CD4-positive, alpha-beta memory T cell (primary cell): ENCODE measurements at regions of chr12 and their contacts with region 1.

Region 1: DNA sequence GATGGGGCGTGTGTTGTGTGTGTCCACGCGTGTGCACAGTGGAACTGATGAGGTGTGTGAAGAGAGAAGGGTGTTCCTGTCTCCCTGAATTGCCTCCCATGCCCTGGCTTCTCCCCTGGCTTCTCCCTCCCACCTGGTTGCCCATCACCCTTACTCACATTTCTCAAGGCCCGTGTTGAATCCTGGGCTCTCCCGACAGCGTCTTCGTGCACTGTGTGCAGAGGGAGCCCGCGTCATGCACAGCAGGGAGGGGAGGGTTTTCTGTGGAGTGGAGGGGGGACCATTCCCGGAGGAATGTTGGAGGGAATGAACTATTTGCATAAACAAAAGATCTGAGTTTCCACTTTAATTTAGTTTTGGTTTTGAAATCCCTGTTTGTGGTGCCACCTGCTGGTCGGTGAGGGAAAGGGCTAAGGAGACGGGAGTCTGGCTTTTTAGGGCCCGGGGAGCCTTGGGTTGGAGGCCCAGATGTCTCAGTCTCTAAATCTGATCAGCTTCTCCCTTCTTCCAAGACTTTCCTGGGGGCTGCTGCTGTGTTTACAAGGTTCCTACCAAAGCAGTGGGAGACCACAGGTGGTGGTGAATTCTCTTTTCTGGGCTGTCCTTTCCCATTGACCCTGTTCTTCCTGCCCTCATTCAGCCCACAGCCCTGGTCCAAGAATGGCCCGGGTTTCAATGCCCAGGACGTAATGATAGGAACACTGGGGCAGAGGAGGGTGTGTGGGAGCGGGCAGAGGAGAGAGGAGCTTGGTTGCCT is at the start of gene C1R:
- DNase-seq: peak; percentile 60 to 71 (median 63)
- H3K4me3 ChIP-seq: peak within 1 kb of the TSS in 1 of 2 donors; percentile 56
- H3K4me3 Mint-ChIP-seq: peak within 1 kb of the TSS; percentile 70 to 90 (median 86)
- H3K27ac ChIP-seq: peak within 1 kb of the TSS; percentile 44
- H3K27ac Mint-ChIP-seq: peak within 1 kb of the TSS in 5 of 7 donors; percentile 57 to 89 (median 84)
- H3K4me1 ChIP-seq: peaks cover 15% of the 10 kb centered on the region
- H3K4me1 Mint-ChIP-seq: peaks cover 6 to 12% (median 8%) of the 10 kb centered on the region in 4 donors
- H3K27me3 ChIP-seq: no peaks in the 10 kb centered on the region
- H3K27me3 Mint-ChIP-seq: no peaks in the 10 kb centered on the region
- total RNA-seq, gene C1R: 0.86 to 2.3 TPM

Region 2: GRCh38 chr12:6851921-6852650 is 240.3 kb before region 1 on chr12 and contains the start of gene USP5:
- CTCF ChIA-PET with region 1: no interaction called
- POLR2A ChIA-PET with region 1: no interaction called
- intact Hi-C with region 1: no loop called
- DNase-seq: peak; percentile 99 to 100 (median 99)
- H3K4me3 ChIP-seq: peak within 1 kb of the TSS; percentile 62 to 97
- H3K4me3 Mint-ChIP-seq: peak within 1 kb of the TSS; percentile 88 to 99 (median 95)
- H3K27ac ChIP-seq: peak within 1 kb of the TSS; percentile 92
- H3K27ac Mint-ChIP-seq: peak within 1 kb of the TSS; percentile 82 to 100 (median 99)
- H3K4me1 ChIP-seq: peaks cover 37% of the 10 kb centered on the region
- H3K4me1 Mint-ChIP-seq: peaks cover 18 to 36% (median 27%) of the 10 kb centered on the region in 4 donors
- H3K27me3 ChIP-seq: no peaks in the 10 kb centered on the region
- H3K27me3 Mint-ChIP-seq: no peaks in the 10 kb centered on the region
- total RNA-seq, gene USP5: 65.2 to 69.3 TPM

Region 3: DNA sequence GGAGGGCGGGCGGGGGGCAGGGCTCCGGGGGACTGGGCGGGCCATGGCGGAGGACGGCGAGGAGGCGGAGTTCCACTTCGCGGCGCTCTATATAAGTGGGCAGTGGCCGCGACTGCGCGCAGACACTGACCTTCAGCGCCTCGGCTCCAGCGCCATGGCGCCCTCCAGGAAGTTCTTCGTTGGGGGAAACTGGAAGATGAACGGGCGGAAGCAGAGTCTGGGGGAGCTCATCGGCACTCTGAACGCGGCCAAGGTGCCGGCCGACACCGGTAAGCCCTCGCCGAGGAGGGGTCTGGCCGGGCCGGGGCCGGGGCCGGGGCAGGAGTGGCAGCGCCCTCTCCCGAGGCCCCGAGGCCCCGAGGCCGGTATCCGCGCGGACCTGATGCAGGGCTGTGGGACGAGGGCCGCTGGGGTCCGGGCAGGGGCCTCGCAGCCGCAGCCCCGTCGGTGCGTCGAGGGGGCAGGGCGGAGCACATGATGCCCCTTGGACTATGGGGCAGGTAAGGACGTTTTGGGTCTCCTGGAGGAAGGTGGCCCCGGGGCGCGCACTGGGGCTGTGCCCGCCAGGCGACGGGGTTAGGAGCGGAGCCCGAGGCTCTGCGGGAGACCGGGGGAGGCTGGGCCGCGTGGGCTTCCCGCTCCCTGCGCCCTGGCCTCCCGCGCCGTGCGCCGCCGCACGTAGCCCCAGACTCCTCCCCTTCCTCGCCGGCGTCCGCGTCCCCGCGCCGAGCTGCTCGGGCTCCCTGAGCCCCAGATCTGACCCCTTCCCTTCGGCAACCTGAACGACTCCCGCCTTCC is 224.8 kb before region 1 on chr12 and contains the start of gene TPI1:
- CTCF ChIA-PET with region 1: interaction called, 11 read pairs
- POLR2A ChIA-PET with region 1: interaction called, 3 read pairs
- intact Hi-C with region 1: loop called (anchors 1 kb)
- DNase-seq: peak; percentile 59 to 68 (median 62)
- H3K4me3 ChIP-seq: peak within 1 kb of the TSS; percentile 36 to 67
- H3K4me3 Mint-ChIP-seq: peak within 1 kb of the TSS; percentile 89 to 96 (median 92)
- H3K27ac ChIP-seq: peak within 1 kb of the TSS; percentile 69
- H3K27ac Mint-ChIP-seq: peak within 1 kb of the TSS; percentile 91 to 97 (median 93)
- H3K4me1 ChIP-seq: peaks cover 51% of the 10 kb centered on the region
- H3K4me1 Mint-ChIP-seq: peaks cover 33 to 58% (median 48%) of the 10 kb centered on the region in 4 donors
- H3K27me3 ChIP-seq: no peaks in the 10 kb centered on the region
- H3K27me3 Mint-ChIP-seq: no peaks in the 10 kb centered on the region
- total RNA-seq, gene TPI1: 155 to 164 TPM

Region 4: GRCh38 chr12:6921996-6922946 is 170.1 kb before region 1 on chr12:
- CTCF ChIA-PET with region 1: interaction called, 17 read pairs
- POLR2A ChIA-PET with region 1: interaction called, 3 read pairs
- intact Hi-C with region 1: loop called (anchors 1 kb)
- DNase-seq: no peak
- H3K4me3 ChIP-seq: no peak overlapping the region
- H3K4me3 Mint-ChIP-seq: no peak overlapping the region
- H3K27ac ChIP-seq: no peak overlapping the region
- H3K27ac Mint-ChIP-seq: peak overlapping the region in 4 of 7 donors; percentile 30 to 95 (median 49)
- H3K4me1 ChIP-seq: peaks cover 19% of the 10 kb centered on the region
- H3K4me1 Mint-ChIP-seq: peaks cover 13 to 33% (median 20%) of the 10 kb centered on the region in 4 donors
- H3K27me3 ChIP-seq: no peaks in the 10 kb centered on the region
- H3K27me3 Mint-ChIP-seq: no peaks in the 10 kb centered on the region

Region 5: GRCh38 chr12:6927379-6928024 is 164.9 kb before region 1 on chr12 and contains the start of gene ATN1:
- CTCF ChIA-PET with region 1: interaction called, 17 read pairs
- POLR2A ChIA-PET with region 1: interaction called, 3 read pairs
- intact Hi-C with region 1: loop called (anchors 1 kb)
- DNase-seq: peak; percentile 37 to 65 (median 45)
- H3K4me3 ChIP-seq: peak within 1 kb of the TSS; percentile 57 to 65
- H3K4me3 Mint-ChIP-seq: peak within 1 kb of the TSS; percentile 88 to 94 (median 90)
- H3K27ac ChIP-seq: peak within 1 kb of the TSS; percentile 67
- H3K27ac Mint-ChIP-seq: peak within 1 kb of the TSS; percentile 91 to 97 (median 94)
- H3K4me1 ChIP-seq: peaks cover 43% of the 10 kb centered on the region
- H3K4me1 Mint-ChIP-seq: peaks cover 31 to 57% (median 43%) of the 10 kb centered on the region in 4 donors
- H3K27me3 ChIP-seq: no peaks in the 10 kb centered on the region
- H3K27me3 Mint-ChIP-seq: no peaks in the 10 kb centered on the region
- total RNA-seq, gene ATN1: 32.2 to 33.0 TPM